Mammary epithelial cell (primary cell): ENCODE measurements at regions of chr19 and their contacts with region 1.

Region 1: GRCh38 chr19:17957149-17957849 is 9.6 kb upstream of the KCNN1 start:
- DNase-seq: no peak
- H3K4me3 ChIP-seq: no peak overlapping the region
- H3K27ac ChIP-seq: no peak overlapping the region
- H3K4me1 ChIP-seq: no peaks in the 10 kb centered on the region
- H3K27me3 ChIP-seq: peaks cover 13% of the 10 kb centered on the region
- CTCF ChIP-seq: no peak

Region 2: DNA sequence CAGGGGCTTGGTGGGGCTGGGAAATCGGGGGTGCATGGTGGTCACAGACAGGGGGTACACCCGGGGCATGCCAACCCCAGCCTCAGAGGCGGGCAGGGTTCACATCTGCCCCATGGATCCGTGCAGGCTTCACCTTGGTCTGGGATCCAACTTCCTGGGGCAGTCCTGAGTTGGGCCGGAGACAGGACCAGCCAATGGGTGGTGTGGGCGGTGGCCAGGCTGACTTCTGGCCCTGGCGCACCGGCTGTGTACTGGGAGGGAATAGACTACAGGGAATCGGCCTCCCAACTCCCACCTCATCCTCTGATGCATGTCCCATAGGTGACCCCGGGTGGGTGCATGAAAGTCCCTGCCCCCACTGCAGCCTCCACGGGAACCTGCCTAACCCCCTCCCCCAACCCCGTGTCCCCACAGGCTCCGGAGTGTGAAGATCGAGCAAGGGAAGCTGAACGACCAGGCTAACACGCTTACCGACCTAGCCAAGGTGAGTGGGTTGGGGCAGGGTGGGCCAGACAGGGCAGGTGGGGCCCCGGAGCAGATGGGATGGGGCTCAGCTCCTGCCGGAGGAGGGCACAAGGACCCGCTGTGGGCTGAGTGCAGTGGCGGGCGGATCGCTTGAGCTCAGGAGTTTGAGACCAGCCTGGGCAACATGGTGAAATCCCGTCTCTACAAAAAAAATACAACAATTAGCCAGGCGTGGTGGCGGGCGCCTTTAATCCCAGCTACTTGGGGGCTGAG is 35.9 kb after region 1 on chr19:
- CTCF ChIA-PET with region 1: no interaction called
- dilution Hi-C with region 1: loop called (anchors 5 kb)
- in situ Hi-C with region 1: no loop called
- intact Hi-C with region 1: no loop called
- DNase-seq: no peak
- H3K4me3 ChIP-seq: no peak overlapping the region
- H3K27ac ChIP-seq: no peak overlapping the region
- H3K4me1 ChIP-seq: no peaks in the 10 kb centered on the region
- H3K27me3 ChIP-seq: no peaks in the 10 kb centered on the region
- CTCF ChIP-seq: no peak

Region 3: DNA sequence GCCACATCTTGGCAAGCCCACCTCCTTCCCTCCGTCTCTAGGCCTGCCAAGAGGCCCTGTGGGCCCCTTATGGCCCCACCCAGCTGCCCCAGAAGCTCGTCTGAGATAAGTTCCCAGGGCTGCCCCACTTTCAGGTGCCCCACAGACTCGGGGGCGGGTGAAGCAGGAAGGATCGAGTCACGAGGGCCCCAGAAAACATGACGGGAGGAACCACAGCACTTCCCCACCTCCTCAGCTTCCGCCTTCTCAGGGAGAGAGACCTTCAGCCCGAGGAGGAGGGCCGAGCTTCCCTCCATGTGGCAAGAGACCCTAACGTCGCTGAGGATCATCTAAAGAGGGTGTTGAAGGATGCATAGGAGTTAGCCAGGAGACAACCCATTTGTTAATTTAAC is 133.9 kb after region 1 on chr19:
- CTCF ChIA-PET with region 1: no interaction called
- dilution Hi-C with region 1: no loop called
- in situ Hi-C with region 1: no loop called
- intact Hi-C with region 1: no loop called
- DNase-seq: no peak
- H3K4me3 ChIP-seq: no peak overlapping the region
- H3K27ac ChIP-seq: no peak overlapping the region
- H3K4me1 ChIP-seq: peaks cover 11% of the 10 kb centered on the region
- H3K27me3 ChIP-seq: no peaks in the 10 kb centered on the region
- CTCF ChIP-seq: no peak

Region 4: GRCh38 chr19:18160971-18161635 is 203.8 kb after region 1 on chr19:
- CTCF ChIA-PET with region 1: no interaction called
- dilution Hi-C with region 1: loop called (anchors 5 kb)
- in situ Hi-C with region 1: no loop called
- intact Hi-C with region 1: no loop called
- DNase-seq: peak; percentile 57
- H3K4me3 ChIP-seq: peak overlapping the region in 2 of 3 experiments; percentile 43 to 44
- H3K27ac ChIP-seq: no peak overlapping the region
- H3K4me1 ChIP-seq: peaks cover 40% of the 10 kb centered on the region
- H3K27me3 ChIP-seq: no peaks in the 10 kb centered on the region
- CTCF ChIP-seq: peak; percentile 41 to 50

Region 5: DNA sequence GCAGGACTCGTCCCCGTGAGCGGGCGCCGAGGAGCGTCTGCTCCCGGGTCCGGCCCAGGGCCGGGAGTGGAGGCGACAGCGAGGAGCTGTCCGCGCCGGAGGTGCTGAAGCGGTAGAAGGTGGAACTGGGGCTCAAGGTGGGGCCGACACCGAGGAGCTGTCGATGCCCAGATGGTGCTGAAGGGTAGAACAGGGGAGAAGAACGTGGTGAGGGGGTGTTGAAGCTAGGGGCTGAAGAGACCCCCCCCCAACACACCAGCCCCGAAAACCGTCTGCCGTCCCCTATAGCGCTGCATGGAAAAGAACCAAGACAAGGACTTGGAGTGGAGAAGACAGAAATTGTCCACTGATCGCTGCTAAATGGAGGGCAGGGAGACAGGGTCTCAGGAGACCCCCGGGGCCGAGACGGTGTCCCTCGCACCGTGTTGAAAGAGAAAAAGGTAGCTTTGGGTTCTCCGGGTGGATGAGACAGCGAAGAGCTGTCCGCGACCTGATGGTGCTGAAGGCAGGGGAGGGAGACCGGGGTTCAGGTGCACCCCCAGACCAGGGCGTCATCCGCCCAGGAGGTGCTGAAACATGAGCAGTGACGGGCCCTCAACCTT is 276.0 kb after region 1 on chr19:
- CTCF ChIA-PET with region 1: no interaction called
- dilution Hi-C with region 1: loop called (anchors 5 kb)
- in situ Hi-C with region 1: no loop called
- intact Hi-C with region 1: no loop called
- DNase-seq: peak; percentile 43
- H3K4me3 ChIP-seq: no peak overlapping the region
- H3K27ac ChIP-seq: no peak overlapping the region
- H3K4me1 ChIP-seq: no peaks in the 10 kb centered on the region
- H3K27me3 ChIP-seq: no peaks in the 10 kb centered on the region
- CTCF ChIP-seq: no peak